CD14-positive monocyte (primary cell): ENCODE measurements at regions of chrX and their contacts with region 1.

Region 1: DNA sequence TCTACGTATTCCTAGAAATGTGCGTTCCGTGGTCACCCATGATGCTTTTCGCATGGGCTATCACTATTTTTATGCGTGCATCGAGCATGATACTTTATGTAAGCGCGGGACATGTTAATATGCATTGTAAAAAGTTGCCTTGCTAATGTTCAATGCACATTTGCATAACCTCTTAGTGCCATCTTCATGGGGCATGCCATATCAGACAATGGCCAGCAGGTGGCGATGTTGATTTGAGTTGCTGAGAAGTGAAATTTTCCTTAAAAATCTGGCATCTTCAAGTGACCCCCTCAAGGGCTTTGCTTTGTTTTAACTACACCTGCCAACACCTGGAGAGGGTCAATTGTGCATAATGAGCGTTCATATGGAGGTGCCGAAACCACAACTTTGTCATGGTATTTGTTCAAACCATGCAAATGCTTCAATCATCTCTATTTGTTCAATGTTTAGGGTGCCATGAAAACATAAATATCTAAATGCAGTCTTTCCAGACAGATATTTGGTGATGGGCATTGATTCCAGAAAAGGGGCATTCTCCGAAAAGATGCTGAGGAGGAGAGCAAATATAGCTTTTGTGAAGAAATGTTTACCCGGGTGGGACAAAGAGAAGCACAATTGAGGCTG is 833.9 kb upstream of the PRKX start:
- DNase-seq: peak; percentile 25 to 32 (median 31)
- H3K4me3 ChIP-seq: no peak overlapping the region
- H3K4me3 Mint-ChIP-seq: no peak overlapping the region
- H3K27ac ChIP-seq: no peak overlapping the region
- H3K27ac Mint-ChIP-seq: no peak overlapping the region
- H3K4me1 ChIP-seq: no peaks in the 10 kb centered on the region
- H3K4me1 Mint-ChIP-seq: no peaks in the 10 kb centered on the region
- H3K27me3 ChIP-seq: no peaks in the 10 kb centered on the region
- H3K27me3 Mint-ChIP-seq: peaks cover 0 to 9% (median 0%) of the 10 kb centered on the region in 3 donors
- CTCF ChIP-seq: peak; percentile 75

Region 2: GRCh38 chrX:5113128-5113527 is 565.8 kb after region 1 on chrX:
- intact Hi-C with region 1: loop called (anchors 5 kb)
- DNase-seq: peak; percentile 2 to 6 (median 4)
- H3K4me3 ChIP-seq: no peak overlapping the region
- H3K4me3 Mint-ChIP-seq: no peak overlapping the region
- H3K27ac ChIP-seq: no peak overlapping the region
- H3K27ac Mint-ChIP-seq: no peak overlapping the region
- H3K4me1 ChIP-seq: no peaks in the 10 kb centered on the region
- H3K4me1 Mint-ChIP-seq: no peaks in the 10 kb centered on the region
- H3K27me3 ChIP-seq: no peaks in the 10 kb centered on the region
- H3K27me3 Mint-ChIP-seq: no peaks in the 10 kb centered on the region
- CTCF ChIP-seq: peak; percentile 62

Region 3: GRCh38 chrX:5876984-5877596 is 1329.8 kb after region 1 on chrX:
- intact Hi-C with region 1: loop called in 1 of 2 experiments (anchors 5 kb)
- DNase-seq: peak in 2 of 3 donors; percentile 7 to 47
- H3K4me3 ChIP-seq: no peak overlapping the region
- H3K4me3 Mint-ChIP-seq: no peak overlapping the region
- H3K27ac ChIP-seq: no peak overlapping the region
- H3K27ac Mint-ChIP-seq: no peak overlapping the region
- H3K4me1 ChIP-seq: no peaks in the 10 kb centered on the region
- H3K4me1 Mint-ChIP-seq: no peaks in the 10 kb centered on the region
- H3K27me3 ChIP-seq: no peaks in the 10 kb centered on the region
- H3K27me3 Mint-ChIP-seq: no peaks in the 10 kb centered on the region
- CTCF ChIP-seq: peak; percentile 26